Activated CD4-positive, alpha-beta T cell treated with anti-CD3 and anti-CD28 coated beads, Interleukin-2, amount 10 ng/mL, durations not matched to agents 7 days and 5 days (primary cell): ENCODE measurements at regions of chr19 and their contacts with region 1.

Region 1: DNA sequence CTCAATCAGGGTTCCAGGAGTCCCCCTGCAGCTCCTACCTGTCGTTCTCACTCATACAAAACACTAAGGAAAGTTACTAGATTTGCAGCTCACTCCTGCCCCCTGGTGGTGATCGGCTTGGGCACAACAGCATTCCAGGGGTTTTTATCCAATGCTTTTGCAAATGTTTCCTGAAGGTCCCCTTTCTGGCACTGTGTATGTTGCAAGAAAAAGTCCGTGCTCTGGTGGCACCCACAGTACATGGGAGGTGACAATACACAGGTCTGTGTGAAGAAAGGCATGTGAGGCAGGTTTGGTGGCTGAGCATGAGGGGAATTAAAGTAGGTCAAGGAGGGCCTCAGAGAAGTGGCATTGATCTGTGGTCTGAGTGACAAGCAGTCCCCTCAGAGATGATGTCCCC is 8.6 kb upstream of the TYK2 start:
- DNase-seq: peak; percentile 80
- H3K4me3 Mint-ChIP-seq: no peak overlapping the region
- H3K27ac Mint-ChIP-seq: no peak overlapping the region
- H3K4me1 Mint-ChIP-seq: peaks cover 3% of the 10 kb centered on the region
- H3K27me3 Mint-ChIP-seq: no peaks in the 10 kb centered on the region

Region 2: DNA sequence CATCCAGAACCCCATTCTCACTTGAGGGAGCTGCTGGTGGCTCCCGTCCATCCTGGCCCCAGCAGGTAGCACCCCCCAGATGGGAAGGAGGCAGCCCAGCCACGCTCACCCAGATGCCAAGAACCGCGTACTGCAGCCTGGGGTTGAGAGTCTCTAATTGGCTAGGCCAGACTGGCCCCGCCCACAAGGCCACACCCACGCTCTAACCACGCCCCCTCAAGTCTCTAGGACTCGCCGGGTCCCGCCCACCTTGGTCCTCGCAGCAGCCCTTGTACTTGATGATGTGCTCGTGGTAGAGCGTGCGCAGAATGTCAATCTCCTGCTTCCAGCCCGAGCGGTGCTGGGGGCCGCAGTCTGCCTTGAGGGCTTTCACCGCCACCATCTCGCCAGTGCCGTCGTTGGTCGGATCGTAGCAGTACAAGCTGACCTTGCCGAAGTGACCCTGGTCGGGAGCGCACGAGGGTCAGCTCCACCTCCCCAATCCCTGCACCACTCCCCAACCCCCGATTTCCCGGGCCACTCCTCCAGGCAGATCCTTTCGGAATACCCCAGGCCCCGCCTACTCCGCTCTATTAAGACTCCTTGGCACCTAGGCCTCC is 35.1 kb before region 1 on chr19:
- CTCF ChIA-PET with region 1: no interaction called
- POLR2A ChIA-PET with region 1: no interaction called
- DNase-seq: peak; percentile 41
- H3K4me3 Mint-ChIP-seq: no peak overlapping the region
- H3K27ac Mint-ChIP-seq: peak overlapping the region; percentile 25
- H3K4me1 Mint-ChIP-seq: no peaks in the 10 kb centered on the region
- H3K27me3 Mint-ChIP-seq: no peaks in the 10 kb centered on the region

Region 3: GRCh38 chr19:10403137-10404021 is 14.4 kb after region 1 on chr19 and contains the start of gene CDC37:
- CTCF ChIA-PET with region 1: interaction called, 15 read pairs
- POLR2A ChIA-PET with region 1: no interaction called
- DNase-seq: peak; percentile 97
- H3K4me3 Mint-ChIP-seq: peak within 1 kb of the TSS; percentile 97
- H3K27ac Mint-ChIP-seq: peak within 1 kb of the TSS; percentile 92
- H3K4me1 Mint-ChIP-seq: peaks cover 69% of the 10 kb centered on the region
- H3K27me3 Mint-ChIP-seq: no peaks in the 10 kb centered on the region
- total RNA-seq, gene CDC37: 200 to 205 TPM